ENCODE measurements at regions of chr10 and their contacts with region 1.

Region 1: DNA sequence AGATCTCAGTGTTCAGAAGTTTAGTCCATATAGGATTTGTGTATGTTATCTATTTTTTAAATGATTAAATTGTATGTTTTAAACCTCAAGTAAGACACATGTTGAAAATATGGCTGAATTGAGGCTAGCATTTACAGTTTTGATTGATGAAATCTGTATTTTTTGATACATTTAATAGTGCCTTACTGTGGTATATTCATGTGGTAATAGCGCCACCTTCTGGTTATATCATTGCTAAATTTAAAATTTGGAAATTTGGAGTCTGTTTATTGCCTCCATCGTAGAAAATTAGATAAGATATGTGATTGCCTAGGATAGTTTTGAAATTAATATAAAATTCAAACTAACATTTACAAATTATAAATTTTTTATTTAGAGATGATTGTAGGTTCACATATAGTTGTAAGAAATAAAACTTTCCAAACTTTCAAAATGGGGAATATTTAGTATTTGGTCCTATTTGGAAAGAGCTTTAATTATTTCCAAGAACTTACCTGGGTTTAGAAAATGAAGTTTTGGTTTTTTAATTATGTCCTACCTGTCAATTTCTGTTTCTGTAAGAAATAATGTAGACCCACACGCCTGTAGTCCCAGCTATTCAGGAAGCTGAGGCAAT is 19.1 kb upstream of the ARMS2 start:
- DNase-seq: peak; percentile 64
- H3K4me3 ChIP-seq: no peak overlapping the region
- H3K27ac ChIP-seq: no peak overlapping the region
- H3K4me1 ChIP-seq: no peaks in the 10 kb centered on the region
- H3K27me3 ChIP-seq: no peaks in the 10 kb centered on the region
- CTCF ChIP-seq: peak; percentile 8 to 23
- POLR2A ChIP-seq: no peak

Region 2: DNA sequence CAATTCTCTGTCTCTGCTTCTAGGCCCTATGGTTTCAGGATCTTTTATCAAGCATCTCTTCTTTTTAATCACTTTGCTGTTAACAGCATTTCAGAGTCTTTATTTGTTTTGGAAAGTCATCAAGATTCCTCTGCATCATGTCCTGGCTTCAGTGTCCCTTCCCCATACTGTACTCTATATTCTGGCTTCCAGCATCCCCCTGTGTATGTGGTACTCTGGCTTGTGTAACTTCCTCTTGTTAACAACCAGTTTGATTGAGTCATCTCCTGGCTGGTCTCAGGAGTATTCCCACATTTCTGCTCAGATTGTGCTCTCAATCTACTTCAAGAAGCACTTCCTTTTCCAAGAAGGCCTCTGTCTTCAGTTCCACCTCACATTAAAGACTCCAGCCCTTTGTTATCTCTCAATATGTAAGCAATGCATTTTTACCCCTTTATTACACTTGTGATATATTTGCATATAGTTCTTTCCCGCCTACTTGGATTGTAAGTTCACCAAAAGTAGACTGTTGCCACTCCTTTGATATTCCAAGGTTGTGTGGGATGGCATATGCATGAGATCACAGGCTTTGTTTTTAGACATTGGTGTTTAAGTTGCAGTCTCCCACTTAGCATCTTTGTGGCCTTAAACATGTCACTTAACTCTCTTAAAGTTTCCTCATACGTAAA is 492.4 kb before region 1 on chr10:
- CTCF ChIA-PET with region 1: no interaction called
- POLR2A ChIA-PET with region 1: no interaction called
- dilution Hi-C with region 1: no loop called
- intact Hi-C with region 1: no loop called
- DNase-seq: peak; percentile 97
- H3K4me3 ChIP-seq: no peak overlapping the region
- H3K27ac ChIP-seq: peak overlapping the region; percentile 69
- H3K4me1 ChIP-seq: peaks cover 23% of the 10 kb centered on the region
- H3K27me3 ChIP-seq: no peaks in the 10 kb centered on the region
- CTCF ChIP-seq: no peak
- POLR2A ChIP-seq: no peak

Region 3: GRCh38 chr10:122279725-122280141 is 155.6 kb before region 1 on chr10:
- CTCF ChIA-PET with region 1: interaction called, 77 read pairs
- POLR2A ChIA-PET with region 1: no interaction called
- dilution Hi-C with region 1: loop called (anchors 25 kb)
- intact Hi-C with region 1: loop called (anchors 1 kb)
- DNase-seq: peak; percentile 74
- H3K4me3 ChIP-seq: no peak overlapping the region
- H3K27ac ChIP-seq: no peak overlapping the region
- H3K4me1 ChIP-seq: peaks cover 2% of the 10 kb centered on the region
- H3K27me3 ChIP-seq: no peaks in the 10 kb centered on the region
- CTCF ChIP-seq: peak; percentile 77 to 81
- POLR2A ChIP-seq: no peak

Region 4: GRCh38 chr10:122342293-122343134 is 92.8 kb before region 1 on chr10:
- CTCF ChIA-PET with region 1: interaction called, 54 read pairs
- POLR2A ChIA-PET with region 1: no interaction called
- dilution Hi-C with region 1: no loop called
- intact Hi-C with region 1: loop called (anchors 1 kb)
- DNase-seq: peak; percentile 71
- H3K4me3 ChIP-seq: no peak overlapping the region
- H3K27ac ChIP-seq: no peak overlapping the region
- H3K4me1 ChIP-seq: no peaks in the 10 kb centered on the region
- H3K27me3 ChIP-seq: no peaks in the 10 kb centered on the region
- CTCF ChIP-seq: peak; percentile 64 to 84
- POLR2A ChIP-seq: no peak

Region 5: GRCh38 chr10:122419876-122420623 is 15.3 kb before region 1 on chr10:
- CTCF ChIA-PET with region 1: interaction called, 19 read pairs
- POLR2A ChIA-PET with region 1: no interaction called
- dilution Hi-C with region 1: no loop called
- intact Hi-C with region 1: no loop called
- DNase-seq: no peak
- H3K4me3 ChIP-seq: no peak overlapping the region
- H3K27ac ChIP-seq: no peak overlapping the region
- H3K4me1 ChIP-seq: no peaks in the 10 kb centered on the region
- H3K27me3 ChIP-seq: no peaks in the 10 kb centered on the region
- CTCF ChIP-seq: no peak
- POLR2A ChIP-seq: no peak

Region 6: DNA sequence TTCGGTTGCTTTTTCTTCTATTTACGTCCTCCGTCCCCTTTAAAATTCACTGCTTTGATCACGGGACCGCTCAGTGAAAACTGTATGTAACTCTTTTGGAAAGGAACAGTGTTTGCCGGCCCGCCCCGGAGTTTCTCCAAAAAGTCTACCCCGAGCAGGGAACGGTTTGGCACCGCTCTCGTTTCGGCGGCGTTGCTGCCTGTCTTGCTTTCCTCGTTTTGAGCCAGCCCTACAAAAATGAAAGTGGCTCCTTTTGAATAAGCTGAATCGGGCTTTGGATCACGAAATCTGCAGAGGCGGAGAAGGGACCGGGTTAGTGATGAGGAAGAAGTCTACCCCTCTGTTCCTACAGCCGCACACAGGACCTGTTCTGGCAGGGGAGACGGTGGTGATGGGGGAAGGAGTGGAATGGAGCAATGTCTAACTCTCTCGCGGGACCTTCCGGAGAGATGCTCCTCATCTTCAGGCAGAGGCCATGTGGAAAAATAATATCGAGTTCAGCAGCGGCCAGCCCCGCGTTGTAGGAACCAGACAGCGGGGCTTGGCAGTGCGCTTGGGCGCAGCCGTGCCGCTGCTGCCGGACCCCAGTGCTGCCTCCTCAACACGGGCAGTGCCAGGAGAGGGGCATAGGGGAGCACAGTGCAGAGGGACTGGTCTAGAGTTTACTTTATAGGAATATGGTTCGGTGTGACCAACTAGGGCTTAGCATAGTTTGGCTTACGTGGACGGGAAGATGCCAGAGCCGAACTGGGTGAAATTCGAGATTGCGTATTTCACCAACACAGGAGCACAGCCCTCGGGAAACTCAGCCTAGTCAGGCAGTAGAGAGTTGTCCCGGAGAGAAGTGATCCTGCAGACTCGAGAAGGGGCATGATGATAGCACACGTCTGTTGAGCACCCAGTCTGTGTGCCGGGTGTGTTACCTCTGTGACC is 27.5 kb after region 1 on chr10:
- CTCF ChIA-PET with region 1: no interaction called
- POLR2A ChIA-PET with region 1: no interaction called
- dilution Hi-C with region 1: no loop called
- intact Hi-C with region 1: no loop called
- DNase-seq: peak; percentile 58
- H3K4me3 ChIP-seq: peak overlapping the region; percentile 71 to 92 (median 88)
- H3K27ac ChIP-seq: peak overlapping the region; percentile 19
- H3K4me1 ChIP-seq: peaks cover 14% of the 10 kb centered on the region
- H3K27me3 ChIP-seq: no peaks in the 10 kb centered on the region
- CTCF ChIP-seq: no peak
- POLR2A ChIP-seq: no peak

Region 7: GRCh38 chr10:122703439-122704118 is 268.3 kb after region 1 on chr10:
- CTCF ChIA-PET with region 1: no interaction called
- POLR2A ChIA-PET with region 1: no interaction called
- dilution Hi-C with region 1: no loop called
- intact Hi-C with region 1: loop called (anchors 5 kb)
- DNase-seq: peak; percentile 55
- H3K4me3 ChIP-seq: no peak overlapping the region
- H3K27ac ChIP-seq: no peak overlapping the region
- H3K4me1 ChIP-seq: no peaks in the 10 kb centered on the region
- H3K27me3 ChIP-seq: peaks cover 0 to 2% of the 10 kb centered on the region in 2 experiments
- CTCF ChIP-seq: peak; percentile 74 to 90
- POLR2A ChIP-seq: no peak